ENCODE measurements at regions of chr5 and their contacts with region 1.

Region 1: DNA sequence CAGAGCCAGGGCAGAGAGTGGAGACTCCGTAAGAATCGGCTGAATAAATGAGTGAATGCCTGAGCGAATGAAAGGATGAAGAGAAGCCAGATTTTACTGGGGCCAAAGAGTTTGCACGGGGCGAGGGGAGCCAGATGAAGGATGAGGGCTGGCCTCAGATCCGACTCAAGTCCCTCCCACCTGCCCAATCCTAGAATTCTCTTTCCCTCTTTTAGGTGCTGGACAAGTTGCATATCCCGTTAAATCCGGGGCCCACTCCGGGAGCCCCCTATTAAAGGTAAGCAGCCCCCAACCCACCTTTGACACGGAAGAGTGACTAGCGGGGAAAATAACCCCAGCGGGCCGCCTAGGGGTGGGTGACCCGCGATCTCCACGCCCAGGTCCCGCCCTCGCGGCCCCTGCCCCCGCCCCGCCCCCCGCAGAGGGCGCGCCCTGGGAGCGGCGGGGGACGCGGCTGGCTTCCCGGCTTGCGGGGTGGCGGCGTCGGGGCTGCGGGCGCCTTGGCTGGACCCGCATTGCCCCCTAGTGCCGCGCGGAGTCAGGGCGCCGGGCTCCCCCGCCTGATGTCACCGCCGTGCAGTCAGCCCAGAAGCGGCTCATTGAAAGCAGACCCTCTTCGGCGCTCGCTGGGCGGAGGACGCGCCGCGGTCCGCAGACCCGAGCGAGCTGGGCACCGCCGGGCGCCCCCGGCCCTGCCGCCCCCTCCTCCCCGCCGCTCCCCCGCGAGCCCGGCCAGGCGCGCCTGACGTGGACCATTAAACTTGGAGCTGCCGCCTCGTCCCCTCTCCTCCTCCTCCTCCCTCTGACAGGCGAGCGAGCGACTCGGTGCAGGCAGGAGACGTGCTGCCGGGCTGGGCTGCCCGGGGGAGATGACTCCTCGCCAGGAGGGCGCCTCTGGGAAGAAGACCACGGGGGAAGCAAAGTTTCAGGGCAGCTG is at the start of gene ADRA1B:
- H3K4me3 Mint-ChIP-seq: no peak within 1 kb of the TSS
- H3K27ac Mint-ChIP-seq: no peak within 1 kb of the TSS
- H3K4me1 Mint-ChIP-seq: peaks cover 12% of the 10 kb centered on the region
- H3K27me3 Mint-ChIP-seq: peaks cover 67% of the 10 kb centered on the region

Region 2: GRCh38 chr5:159286420-159287035 is 629.6 kb before region 1 on chr5:
- intact Hi-C with region 1: loop called (anchors 5 kb)
- H3K4me3 Mint-ChIP-seq: no peak overlapping the region
- H3K27ac Mint-ChIP-seq: no peak overlapping the region
- H3K4me1 Mint-ChIP-seq: no peaks in the 10 kb centered on the region
- H3K27me3 Mint-ChIP-seq: no peaks in the 10 kb centered on the region

Region 3: DNA sequence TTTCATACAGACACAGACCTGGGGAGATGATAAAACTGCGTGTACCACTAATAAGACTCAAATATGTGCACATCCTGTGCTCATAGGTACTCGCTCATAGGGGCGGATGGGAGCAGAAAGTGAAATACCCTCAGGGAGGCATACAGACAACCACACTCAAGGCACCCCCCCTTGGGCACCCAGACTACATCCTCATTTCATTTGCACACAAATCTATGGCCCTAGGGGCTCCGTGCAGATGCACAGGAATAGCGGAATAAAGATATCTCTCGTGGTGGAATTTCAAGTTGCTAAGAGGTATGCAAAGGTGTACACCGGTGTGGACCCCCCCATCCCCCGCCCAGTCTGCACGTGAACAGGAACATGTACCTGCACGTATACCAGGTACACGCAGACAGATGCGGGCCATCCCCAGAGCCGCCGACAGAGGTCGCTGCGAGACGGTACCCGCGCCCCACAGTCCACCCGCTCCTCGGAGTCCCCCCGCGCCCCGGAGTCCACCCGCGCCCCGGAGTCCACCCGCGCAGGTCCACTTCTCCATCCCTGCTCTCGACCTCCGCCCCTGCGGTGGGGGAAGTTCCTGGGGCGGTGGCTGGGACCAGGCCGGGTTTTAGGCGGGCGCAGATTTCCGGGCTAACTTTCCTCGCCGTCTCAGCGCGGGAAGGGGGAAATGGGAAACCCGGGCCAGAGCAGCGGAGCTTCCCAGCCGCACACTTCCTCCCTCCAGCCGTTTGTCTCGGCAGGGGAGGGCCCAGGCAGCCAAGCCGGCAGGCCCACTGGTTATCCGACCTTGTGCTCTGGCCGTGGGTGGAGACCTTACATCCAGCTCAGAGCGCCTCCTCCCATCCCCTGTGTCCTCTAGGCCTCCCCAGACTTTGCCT is 584.8 kb before region 1 on chr5:
- intact Hi-C with region 1: loop called (anchors 5 kb)
- H3K4me3 Mint-ChIP-seq: peak overlapping the region; percentile 68
- H3K27ac Mint-ChIP-seq: peak overlapping the region; percentile 68
- H3K4me1 Mint-ChIP-seq: peaks cover 30% of the 10 kb centered on the region
- H3K27me3 Mint-ChIP-seq: peaks cover 2% of the 10 kb centered on the region

Region 4: GRCh38 chr5:159444441-159445082 is 471.6 kb before region 1 on chr5:
- intact Hi-C with region 1: loop called (anchors 2 kb)
- H3K4me3 Mint-ChIP-seq: no peak overlapping the region
- H3K27ac Mint-ChIP-seq: no peak overlapping the region
- H3K4me1 Mint-ChIP-seq: no peaks in the 10 kb centered on the region
- H3K27me3 Mint-ChIP-seq: peaks cover 2% of the 10 kb centered on the region

Region 5: DNA sequence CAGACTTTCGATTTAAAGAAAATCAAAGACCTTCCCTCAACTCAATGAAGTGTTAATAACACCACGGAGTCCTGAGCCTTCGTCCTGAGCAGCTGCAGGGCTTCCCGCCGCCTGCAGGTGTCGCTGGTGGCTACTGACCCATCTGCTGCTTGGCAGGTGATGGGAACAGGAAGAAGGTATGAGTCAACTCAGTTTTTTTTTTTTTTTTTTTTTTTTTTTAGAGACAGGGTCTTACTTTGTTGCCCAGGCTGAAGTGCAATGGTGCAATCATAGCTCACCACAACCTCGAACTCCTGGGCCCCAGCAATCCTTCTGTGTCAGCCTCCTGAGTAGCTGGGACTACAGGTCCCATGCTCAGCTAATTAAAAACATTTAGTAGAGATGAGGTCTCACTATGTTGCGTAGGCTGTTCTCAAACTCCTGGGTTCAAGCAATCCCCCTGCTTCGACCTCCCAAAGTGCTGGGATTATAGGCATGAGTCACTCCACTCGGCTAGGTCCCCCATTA is 400.2 kb before region 1 on chr5:
- intact Hi-C with region 1: loop called (anchors 5 kb)
- H3K4me3 Mint-ChIP-seq: no peak overlapping the region
- H3K27ac Mint-ChIP-seq: no peak overlapping the region
- H3K4me1 Mint-ChIP-seq: no peaks in the 10 kb centered on the region
- H3K27me3 Mint-ChIP-seq: peaks cover 8% of the 10 kb centered on the region

Measured in dendritic cell treated with granulocyte-macrophage colony-stimulating factor and Interleukin-4, amounts not matched to agents 40 ng/mL and 50 ng/mL, for 4 days (primary cell).